ENCODE measurements at regions of chr17 and their contacts with region 1.

Region 1: DNA sequence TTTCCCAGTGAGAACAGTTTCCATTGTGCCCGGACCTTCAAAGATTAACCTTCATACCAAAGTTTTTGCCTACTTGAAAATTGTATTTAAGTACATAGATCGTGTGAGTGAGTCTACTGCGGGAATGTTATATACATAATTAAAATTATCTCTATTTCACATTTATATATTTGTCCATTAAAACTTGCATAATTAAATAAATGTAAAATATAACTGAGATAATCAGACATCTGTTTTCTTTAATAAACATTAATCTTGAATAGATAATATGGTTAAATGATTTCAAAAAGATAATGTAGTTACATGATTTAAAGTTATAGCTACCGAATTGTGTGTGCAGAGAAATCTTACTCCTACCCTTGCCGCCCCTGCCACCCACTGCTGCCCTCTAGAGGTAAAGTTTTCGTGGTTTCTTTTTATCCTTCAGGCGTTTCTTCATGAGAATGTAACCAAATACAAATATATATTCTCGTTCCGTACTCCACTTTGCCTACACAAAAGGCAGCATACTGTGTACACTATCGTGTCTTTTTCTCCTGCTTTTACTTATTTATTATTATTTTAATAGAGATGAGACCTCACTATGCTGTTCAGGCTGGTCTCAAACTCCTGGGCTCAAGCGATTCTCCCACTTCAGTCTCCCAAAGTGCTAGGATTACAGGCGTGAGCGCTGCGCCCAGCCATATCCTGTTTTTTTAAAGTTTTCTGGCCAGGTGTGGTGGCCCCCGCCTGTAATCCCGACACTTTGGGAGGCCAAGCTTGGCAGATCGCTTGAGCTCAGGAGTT is 35.6 kb downstream of the RPA1 start:
- H3K4me3 ChIP-seq: no peak overlapping the region
- H3K27ac ChIP-seq: no peak overlapping the region
- H3K4me1 ChIP-seq: no peaks in the 10 kb centered on the region
- CTCF ChIP-seq: no peak; the same call in 1 of the 2 replicates

Region 2: GRCh38 chr17:1724506-1725362 is 140.7 kb before region 1 on chr17 and contains the start of gene WDR81:
- CTCF ChIA-PET with region 1: interaction called, 25 read pairs
- POLR2A ChIA-PET with region 1: no interaction called
- H3K4me3 ChIP-seq: peak within 1 kb of the TSS; percentile 47
- H3K27ac ChIP-seq: peak within 1 kb of the TSS; percentile 37; the same call in 1 of the 2 replicates
- H3K4me1 ChIP-seq: no peaks in the 10 kb centered on the region
- CTCF ChIP-seq: no peak

Region 3: DNA sequence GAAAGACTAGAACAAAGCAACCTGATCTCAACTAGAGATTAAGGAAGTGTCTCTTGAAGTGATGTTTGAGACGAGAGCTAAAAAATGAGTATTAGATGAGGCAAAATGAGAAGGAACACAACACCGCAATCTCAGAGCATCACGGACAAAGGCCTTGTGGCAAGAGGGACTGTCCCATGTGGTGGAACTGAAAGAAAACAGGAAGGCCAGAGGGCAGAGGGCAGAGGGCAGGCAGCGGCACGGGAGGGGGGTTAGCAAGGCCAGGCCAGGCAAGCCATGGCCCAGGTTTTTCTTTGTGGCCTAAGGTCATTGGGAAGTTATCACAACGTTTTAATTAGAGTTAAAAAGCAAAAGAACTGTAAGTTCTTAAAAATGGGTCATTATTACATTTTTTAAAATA is 13.1 kb before region 1 on chr17:
- CTCF ChIA-PET with region 1: interaction called, 14 read pairs
- POLR2A ChIA-PET with region 1: no interaction called
- H3K4me3 ChIP-seq: no peak overlapping the region
- H3K27ac ChIP-seq: no peak overlapping the region
- H3K4me1 ChIP-seq: no peaks in the 10 kb centered on the region
- CTCF ChIP-seq: no peak

Region 4: DNA sequence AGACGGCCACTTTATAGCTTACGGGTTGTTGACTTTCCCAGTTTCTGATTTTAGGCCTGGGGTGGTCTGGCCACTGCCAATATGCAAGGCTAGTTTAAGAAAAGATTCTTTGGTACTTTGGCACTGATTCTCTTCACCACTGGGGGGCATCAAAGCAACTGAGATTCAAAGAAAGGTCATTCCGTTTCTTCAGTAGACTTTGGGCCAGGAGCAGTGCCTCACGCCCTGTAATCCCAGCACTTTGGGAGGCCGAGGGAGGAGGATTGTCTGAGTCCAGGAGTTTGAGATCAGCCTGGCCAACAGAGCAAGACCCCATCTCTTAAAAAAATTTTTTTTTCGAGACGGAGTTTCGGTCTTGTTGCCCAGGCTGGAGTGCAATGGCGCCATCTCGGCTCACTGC is 17.4 kb after region 1 on chr17:
- CTCF ChIA-PET with region 1: interaction called, 11 read pairs
- POLR2A ChIA-PET with region 1: no interaction called
- H3K4me3 ChIP-seq: no peak overlapping the region
- H3K27ac ChIP-seq: no peak overlapping the region
- H3K4me1 ChIP-seq: no peaks in the 10 kb centered on the region
- CTCF ChIP-seq: 0 out of 2 replicates have a peak, but pooled peaks have one; percentile 18

Region 5: DNA sequence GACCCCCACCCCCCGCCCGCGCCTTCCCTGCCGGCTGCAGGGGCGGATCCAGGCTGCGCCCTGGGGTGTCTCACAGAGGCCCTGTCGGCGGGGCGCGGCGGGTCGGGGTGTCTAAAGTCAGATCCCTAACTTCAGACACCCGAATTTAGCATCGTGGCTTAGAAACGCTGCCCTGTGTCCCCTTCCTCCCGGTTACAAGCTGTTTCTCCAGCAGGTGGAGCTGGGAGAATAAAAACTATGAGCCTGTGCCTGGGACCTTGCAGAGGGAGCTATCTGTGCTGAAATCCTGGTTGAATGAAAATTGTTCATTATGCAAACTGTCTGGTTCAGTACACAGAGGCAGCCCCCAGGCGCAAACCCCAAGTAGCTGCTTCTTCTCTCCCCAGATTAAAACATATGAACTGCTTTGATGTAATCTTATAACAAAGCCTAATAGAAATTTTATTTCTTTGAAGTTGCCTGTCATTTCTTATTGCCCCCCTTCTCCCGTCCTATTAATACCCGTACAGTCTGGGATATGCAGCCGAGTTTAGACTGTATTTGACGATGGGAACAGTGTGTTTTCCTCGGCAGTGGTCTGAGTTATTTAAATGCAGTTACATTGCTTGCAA is 43.4 kb after region 1 on chr17:
- CTCF ChIA-PET with region 1: interaction called, 12 read pairs
- POLR2A ChIA-PET with region 1: no interaction called
- H3K4me3 ChIP-seq: no peak overlapping the region
- H3K27ac ChIP-seq: no peak overlapping the region
- H3K4me1 ChIP-seq: peaks cover 16% of the 10 kb centered on the region
- CTCF ChIP-seq: peak; percentile 59